ENCODE measurements at regions of chr7 and their contacts with region 1.

Region 1: GRCh38 chr7:3215761-3216519 is 85.1 kb upstream of the SDK1 start:
- DNase-seq: peak; percentile 69 to 94
- H3K4me3 ChIP-seq: no peak overlapping the region; the same call in 1 of the 2 replicates
- H3K27ac ChIP-seq: peak overlapping the region; percentile 31; the same call in 1 of the 2 replicates
- H3K4me1 ChIP-seq: peaks cover 32% of the 10 kb centered on the region
- H3K27me3 ChIP-seq: no peaks in the 10 kb centered on the region
- CTCF ChIP-seq: no peak

Region 2: DNA sequence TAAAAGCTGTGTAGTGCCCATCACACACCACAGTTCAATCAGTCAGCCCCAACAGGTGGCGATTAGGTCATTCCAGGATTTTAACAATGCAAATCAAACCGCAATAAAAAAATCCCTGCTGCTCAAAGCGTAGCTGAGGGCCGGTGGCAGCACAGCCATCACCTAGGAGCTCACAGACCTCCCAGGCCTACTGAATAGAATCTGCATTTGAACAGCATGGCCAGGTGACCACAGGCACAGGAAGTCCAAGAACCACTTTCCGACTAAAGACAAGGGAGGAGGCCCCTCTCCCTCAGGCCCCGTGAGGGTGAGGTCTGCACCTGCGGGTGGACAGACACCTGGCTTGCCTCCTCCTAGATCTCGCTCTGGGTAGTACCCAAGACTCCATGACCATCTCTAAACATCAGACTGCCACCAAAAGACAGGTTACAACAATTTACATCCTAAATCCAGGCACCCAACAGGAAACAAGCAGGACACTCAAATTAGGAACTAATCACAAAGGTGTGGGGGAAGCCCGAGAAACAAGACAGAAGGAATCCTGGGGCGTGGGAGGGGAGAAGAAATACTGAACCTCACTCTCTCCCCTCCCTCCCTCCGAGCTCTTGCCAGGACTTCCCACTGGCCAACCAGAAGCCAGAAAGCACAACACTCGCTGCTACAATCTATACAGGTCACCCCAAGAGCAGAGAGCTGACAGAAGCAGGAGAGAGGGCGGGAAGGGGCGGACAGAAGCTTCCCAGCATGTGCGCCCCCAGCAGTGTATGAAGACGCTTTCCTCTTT is 391.1 kb before region 1 on chr7:
- CTCF ChIA-PET with region 1: no interaction called
- POLR2A ChIA-PET with region 1: no interaction called
- intact Hi-C with region 1: no loop called
- DNase-seq: no peak
- H3K4me3 ChIP-seq: no peak overlapping the region
- H3K27ac ChIP-seq: no peak overlapping the region
- H3K4me1 ChIP-seq: peaks cover 45% of the 10 kb centered on the region
- H3K27me3 ChIP-seq: no peaks in the 10 kb centered on the region
- CTCF ChIP-seq: no peak

Region 3: GRCh38 chr7:3200504-3200903 is 15.4 kb before region 1 on chr7:
- CTCF ChIA-PET with region 1: no interaction called
- POLR2A ChIA-PET with region 1: no interaction called
- intact Hi-C with region 1: no loop called
- DNase-seq: no peak
- H3K4me3 ChIP-seq: no peak overlapping the region
- H3K27ac ChIP-seq: no peak overlapping the region
- H3K4me1 ChIP-seq: peaks cover 15% of the 10 kb centered on the region
- H3K27me3 ChIP-seq: no peaks in the 10 kb centered on the region
- CTCF ChIP-seq: peak; percentile 60

Region 4: GRCh38 chr7:3244241-3244814 is 28.4 kb after region 1 on chr7:
- CTCF ChIA-PET with region 1: interaction called, 5 read pairs
- POLR2A ChIA-PET with region 1: no interaction called
- intact Hi-C with region 1: loop called (anchors 1 kb)
- DNase-seq: peak; percentile 71 to 95
- H3K4me3 ChIP-seq: peak overlapping the region; percentile 36; the same call in 1 of the 2 replicates
- H3K27ac ChIP-seq: peak overlapping the region; percentile 64
- H3K4me1 ChIP-seq: peaks cover 39% of the 10 kb centered on the region
- H3K27me3 ChIP-seq: no peaks in the 10 kb centered on the region
- CTCF ChIP-seq: no peak

Measured in PC-9 (cell line).